Activated B cell treated with CpG ODN at 0.5 μM for 24 hours (primary cell): ENCODE measurements at regions of chr12 and their contacts with region 1.

Region 1: GRCh38 chr12:24750263-24750662 is 198.6 kb downstream of the BCAT1 start:
- DNase-seq: no peak
- ATAC-seq: no peak
- H3K4me3 Mint-ChIP-seq: no peak overlapping the region
- H3K27ac Mint-ChIP-seq: no peak overlapping the region
- H3K4me1 Mint-ChIP-seq: peaks cover 9% of the 10 kb centered on the region
- H3K27me3 Mint-ChIP-seq: no peaks in the 10 kb centered on the region
- CTCF ChIP-seq: no peak

Region 2: DNA sequence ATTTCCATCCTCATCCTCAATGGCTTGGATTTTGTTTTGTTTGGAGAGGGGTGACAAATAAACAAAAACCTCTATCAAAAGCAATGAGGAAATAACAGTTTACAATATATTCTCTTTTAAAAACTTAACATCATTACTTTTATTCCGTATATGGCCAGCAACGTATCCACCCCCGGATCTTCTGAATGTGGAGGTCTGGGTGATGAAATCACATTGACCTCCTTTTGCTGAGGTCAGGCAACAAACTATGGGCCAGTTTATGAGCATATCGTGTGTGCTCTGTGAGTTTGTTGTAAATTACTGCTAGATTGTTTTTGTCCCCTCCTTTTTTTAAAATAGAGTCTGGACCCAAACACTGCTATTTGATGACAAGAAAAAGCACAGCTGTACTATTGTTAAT is 20.6 kb after region 1 on chr12:
- CTCF ChIA-PET with region 1: no interaction called
- POLR2A ChIA-PET with region 1: interaction called, 3 read pairs
- intact Hi-C with region 1: loop called (anchors 2 kb)
- DNase-seq: no peak
- ATAC-seq: no peak
- H3K4me3 Mint-ChIP-seq: no peak overlapping the region
- H3K27ac Mint-ChIP-seq: no peak overlapping the region
- H3K4me1 Mint-ChIP-seq: peaks cover 4% of the 10 kb centered on the region
- H3K27me3 Mint-ChIP-seq: no peaks in the 10 kb centered on the region
- CTCF ChIP-seq: no peak